Naive thymus-derived CD4-positive, alpha-beta T cell (primary cell): ENCODE measurements at regions of chr15 and their contacts with region 1.

Region 1: DNA sequence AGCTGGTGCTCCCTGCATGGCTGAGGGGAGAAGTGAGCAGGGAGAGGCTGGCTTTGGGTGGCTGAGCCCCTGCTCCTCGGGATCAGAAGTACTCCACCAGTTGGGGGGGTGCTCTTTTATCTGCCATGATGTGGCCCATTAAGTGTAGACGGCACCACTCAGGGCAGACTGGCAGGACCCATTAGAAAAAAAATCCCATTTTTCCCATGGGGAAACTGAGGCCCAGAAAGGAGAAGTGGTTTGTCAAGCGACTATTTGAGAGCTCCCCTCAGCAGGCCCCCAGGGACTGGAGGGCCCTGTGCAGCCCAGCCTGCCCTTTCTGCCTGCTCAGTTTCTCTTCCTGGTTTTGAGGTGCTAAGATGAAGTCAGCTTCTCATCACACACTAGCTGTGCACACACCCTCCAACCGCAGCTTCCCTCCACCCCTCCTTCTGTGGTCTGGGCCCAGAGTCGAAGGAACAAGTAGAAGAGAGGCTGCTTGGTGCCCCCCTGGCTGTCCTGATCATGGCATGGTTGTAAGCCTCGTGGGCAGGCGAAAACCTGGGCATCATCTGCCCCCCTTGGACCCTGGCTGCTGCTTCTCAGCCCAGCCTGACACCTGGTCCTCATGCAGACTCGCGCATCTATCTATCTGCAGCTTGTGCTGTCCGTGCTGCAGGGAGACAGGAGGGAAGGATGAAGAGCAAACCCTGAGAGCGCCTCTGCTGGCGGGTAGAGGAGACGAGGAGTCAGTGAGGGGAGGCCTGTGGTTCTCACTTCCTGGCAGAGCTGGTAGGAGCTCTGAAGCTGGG is 5.6 kb downstream of the CSK start:
- DNase-seq: peak; percentile 69 to 97 (median 96)
- ATAC-seq: peak; percentile 85
- H3K4me3 ChIP-seq: peak overlapping the region; percentile 85
- H3K4me3 Mint-ChIP-seq: peak overlapping the region; percentile 87 to 97 (median 93)
- H3K27ac ChIP-seq: peak overlapping the region; percentile 92
- H3K27ac Mint-ChIP-seq: peak overlapping the region; percentile 95 to 99 (median 98)
- H3K4me1 ChIP-seq: peaks cover 66 to 72% of the 10 kb centered on the region in 2 donors
- H3K4me1 Mint-ChIP-seq: peaks cover 57 to 78% (median 75%) of the 10 kb centered on the region in 7 donors
- H3K27me3 ChIP-seq: no peaks in the 10 kb centered on the region
- H3K27me3 Mint-ChIP-seq: no peaks in the 10 kb centered on the region

Region 2: DNA sequence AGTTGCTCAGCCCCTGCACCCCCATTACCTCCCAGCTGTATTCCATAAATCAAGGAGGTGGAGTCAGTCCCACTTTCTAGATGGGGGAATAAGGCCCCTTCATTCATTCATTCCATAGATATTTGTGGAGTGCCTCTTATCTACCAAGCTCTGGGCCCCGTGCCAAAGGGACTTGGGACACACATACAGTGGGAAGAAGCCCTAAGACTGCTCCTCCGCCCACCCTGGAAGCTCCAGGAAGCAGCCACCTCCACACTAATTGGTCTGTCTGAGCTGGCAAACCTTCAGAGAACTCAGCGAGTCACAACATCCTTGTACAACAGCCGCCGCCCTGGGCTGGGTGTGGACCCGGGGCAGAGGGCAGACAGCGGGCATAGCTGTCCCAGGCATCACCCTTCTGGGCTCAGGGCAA is 591.3 kb before region 1 on chr15:
- CTCF ChIA-PET with region 1: no interaction called
- POLR2A ChIA-PET with region 1: no interaction called
- intact Hi-C with region 1: no loop called
- DNase-seq: no peak
- ATAC-seq: no peak
- H3K4me3 ChIP-seq: no peak overlapping the region
- H3K4me3 Mint-ChIP-seq: no peak overlapping the region
- H3K27ac ChIP-seq: no peak overlapping the region
- H3K27ac Mint-ChIP-seq: no peak overlapping the region
- H3K4me1 ChIP-seq: no peaks in the 10 kb centered on the region
- H3K4me1 Mint-ChIP-seq: no peaks in the 10 kb centered on the region
- H3K27me3 ChIP-seq: no peaks in the 10 kb centered on the region
- H3K27me3 Mint-ChIP-seq: peaks cover 0 to 6% (median 0%) of the 10 kb centered on the region in 5 donors

Region 3: DNA sequence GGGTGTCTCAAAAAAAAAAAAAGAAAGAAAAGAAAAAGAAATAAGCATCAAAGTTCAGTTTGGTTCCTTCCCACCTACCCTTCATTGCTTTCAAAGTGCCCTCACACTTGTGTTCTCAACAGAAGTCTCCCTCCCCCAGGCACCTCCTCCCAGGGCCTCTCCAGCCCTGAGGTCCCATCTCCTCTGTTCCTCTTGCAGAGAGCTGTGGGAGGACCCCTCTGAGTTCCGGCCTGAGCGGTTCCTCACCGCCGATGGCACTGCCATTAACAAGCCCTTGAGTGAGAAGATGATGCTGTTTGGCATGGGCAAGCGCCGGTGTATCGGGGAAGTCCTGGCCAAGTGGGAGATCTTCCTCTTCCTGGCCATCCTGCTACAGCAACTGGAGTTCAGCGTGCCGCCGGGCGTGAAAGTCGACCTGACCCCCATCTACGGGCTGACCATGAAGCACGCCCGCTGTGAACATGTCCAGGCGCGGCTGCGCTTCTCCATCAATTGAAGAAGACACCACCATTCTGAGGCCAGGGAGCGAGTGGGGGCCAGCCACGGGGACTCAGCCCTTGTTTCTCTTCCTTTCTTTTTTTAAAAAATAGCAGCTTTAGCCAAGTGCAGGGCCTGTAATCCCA is 32.7 kb before region 1 on chr15:
- CTCF ChIA-PET with region 1: no interaction called
- POLR2A ChIA-PET with region 1: no interaction called
- intact Hi-C with region 1: no loop called
- DNase-seq: no peak
- ATAC-seq: no peak
- H3K4me3 ChIP-seq: no peak overlapping the region
- H3K4me3 Mint-ChIP-seq: no peak overlapping the region
- H3K27ac ChIP-seq: no peak overlapping the region
- H3K27ac Mint-ChIP-seq: no peak overlapping the region
- H3K4me1 ChIP-seq: no peaks in the 10 kb centered on the region
- H3K4me1 Mint-ChIP-seq: peaks cover 0 to 2% (median 0%) of the 10 kb centered on the region in 7 donors
- H3K27me3 ChIP-seq: no peaks in the 10 kb centered on the region
- H3K27me3 Mint-ChIP-seq: peaks cover 0 to 5% (median 0%) of the 10 kb centered on the region in 5 donors

Region 4: GRCh38 chr15:74799856-74800547 is 12.6 kb after region 1 on chr15:
- CTCF ChIA-PET with region 1: interaction called, 1,110 read pairs
- POLR2A ChIA-PET with region 1: interaction called, 1,077 read pairs
- intact Hi-C with region 1: loop called (anchors 1 kb)
- DNase-seq: peak; percentile 76 to 92 (median 85)
- ATAC-seq: peak; percentile 98
- H3K4me3 ChIP-seq: no peak overlapping the region
- H3K4me3 Mint-ChIP-seq: peak overlapping the region in 6 of 10 donors; percentile 13 to 61 (median 41)
- H3K27ac ChIP-seq: peak overlapping the region; percentile 92
- H3K27ac Mint-ChIP-seq: peak overlapping the region; percentile 66 to 93 (median 84)
- H3K4me1 ChIP-seq: peaks cover 51 to 54% of the 10 kb centered on the region in 2 donors
- H3K4me1 Mint-ChIP-seq: peaks cover 31 to 60% (median 48%) of the 10 kb centered on the region in 7 donors
- H3K27me3 ChIP-seq: no peaks in the 10 kb centered on the region
- H3K27me3 Mint-ChIP-seq: no peaks in the 10 kb centered on the region

Region 5: GRCh38 chr15:74873036-74873755 is 85.8 kb after region 1 on chr15 and contains the start of gene SCAMP2:
- CTCF ChIA-PET with region 1: no interaction called
- POLR2A ChIA-PET with region 1: interaction called, 5 read pairs
- intact Hi-C with region 1: loop called in 1 of 2 experiments (anchors 5 kb)
- DNase-seq: peak; percentile 83 to 94 (median 91)
- ATAC-seq: peak; percentile 95
- H3K4me3 ChIP-seq: peak within 1 kb of the TSS; percentile 86
- H3K4me3 Mint-ChIP-seq: peak within 1 kb of the TSS; percentile 92 to 100 (median 98)
- H3K27ac ChIP-seq: peak within 1 kb of the TSS; percentile 98
- H3K27ac Mint-ChIP-seq: peak within 1 kb of the TSS; percentile 88 to 99 (median 96)
- H3K4me1 ChIP-seq: peaks cover 38 to 39% of the 10 kb centered on the region in 2 donors
- H3K4me1 Mint-ChIP-seq: peaks cover 31 to 54% (median 45%) of the 10 kb centered on the region in 7 donors
- H3K27me3 ChIP-seq: no peaks in the 10 kb centered on the region
- H3K27me3 Mint-ChIP-seq: peaks cover 0 to 8% (median 0%) of the 10 kb centered on the region in 5 donors
- total RNA-seq, gene SCAMP2: 78.9 to 130 (median 116) TPM

Region 6: DNA sequence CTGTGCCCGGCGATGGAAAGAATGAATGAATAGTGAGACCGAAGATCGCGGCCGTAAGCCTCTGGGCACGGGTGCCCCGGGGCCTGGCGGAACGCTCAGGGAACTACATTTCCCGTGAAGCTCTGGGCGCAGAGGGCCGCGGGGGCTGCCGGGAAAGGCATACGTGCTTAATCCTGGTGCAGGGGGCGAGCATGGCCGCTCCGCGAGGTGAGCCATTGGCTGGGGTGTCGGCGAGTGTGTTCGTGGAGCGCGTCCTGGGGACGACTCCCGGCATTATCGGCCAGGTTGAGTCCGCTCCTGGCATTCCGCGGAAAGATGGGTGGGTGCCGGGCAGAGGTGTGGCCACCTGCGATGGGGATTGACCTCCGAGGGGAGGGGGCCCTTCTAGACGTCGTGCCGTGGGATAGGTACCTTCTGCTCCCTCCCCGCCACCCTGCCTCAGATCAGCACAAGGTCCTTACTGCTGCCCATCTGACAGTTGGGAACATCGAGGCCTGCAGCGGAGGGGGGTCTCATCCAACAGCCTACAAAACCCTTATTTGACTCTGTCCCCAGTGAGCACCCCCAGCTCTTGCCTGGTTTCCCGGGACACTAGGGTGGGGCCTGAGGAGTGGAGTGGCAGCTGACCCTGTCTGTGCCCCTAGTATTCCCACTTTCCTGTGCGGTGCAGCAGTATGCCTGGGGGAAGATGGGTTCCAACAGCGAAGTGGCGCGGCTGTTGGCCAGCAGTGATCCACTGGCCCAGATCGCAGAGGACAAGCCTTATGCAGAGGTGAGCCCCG is 102.6 kb after region 1 on chr15 and contains the start of gene MPI:
- CTCF ChIA-PET with region 1: interaction called, 3 read pairs
- POLR2A ChIA-PET with region 1: interaction called, 5 read pairs
- intact Hi-C with region 1: loop called (anchors 5 kb)
- DNase-seq: peak; percentile 65 to 87 (median 79)
- ATAC-seq: peak; percentile 97
- H3K4me3 ChIP-seq: peak within 1 kb of the TSS; percentile 94
- H3K4me3 Mint-ChIP-seq: peak within 1 kb of the TSS; percentile 81 to 95 (median 90)
- H3K27ac ChIP-seq: peak within 1 kb of the TSS; percentile 84
- H3K27ac Mint-ChIP-seq: peak within 1 kb of the TSS; percentile 83 to 99 (median 94)
- H3K4me1 ChIP-seq: peaks cover 33 to 36% of the 10 kb centered on the region in 2 donors
- H3K4me1 Mint-ChIP-seq: peaks cover 30 to 59% (median 49%) of the 10 kb centered on the region in 7 donors
- H3K27me3 ChIP-seq: no peaks in the 10 kb centered on the region
- H3K27me3 Mint-ChIP-seq: no peaks in the 10 kb centered on the region
- total RNA-seq, gene MPI: 34.0 to 97.8 (median 80.6) TPM